ENCODE measurements at regions of chr17 and their contacts with region 1.

Region 1: DNA sequence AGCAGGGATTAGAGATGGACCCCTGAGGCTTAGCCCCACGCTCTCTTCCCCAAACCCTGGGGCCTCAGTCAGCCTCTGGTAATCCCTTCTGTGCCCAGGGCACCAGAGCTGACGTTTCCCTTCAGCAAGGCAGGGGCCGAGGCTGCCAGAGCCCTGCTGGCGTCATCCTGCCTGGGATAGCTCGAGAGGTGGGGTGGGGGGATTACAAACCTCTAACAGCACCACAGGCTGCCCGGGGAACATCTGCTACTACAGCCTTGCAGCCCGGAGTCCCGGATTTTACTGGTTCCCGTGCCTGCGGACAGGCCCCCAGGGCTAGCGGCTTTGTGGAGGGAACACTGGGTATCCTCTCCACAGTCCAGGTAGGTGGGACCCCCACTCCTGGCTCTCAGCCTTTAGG is at the start of gene AANAT:
- DNase-seq: no peak
- ATAC-seq: no peak
- H3K4me3 ChIP-seq: no peak within 1 kb of the TSS
- H3K4me3 Mint-ChIP-seq: no peak within 1 kb of the TSS
- H3K27ac ChIP-seq: no peak within 1 kb of the TSS
- H3K27ac Mint-ChIP-seq: peak within 1 kb of the TSS in 1 of 2 donors; percentile 8
- H3K4me1 ChIP-seq: peaks cover 13% of the 10 kb centered on the region
- H3K4me1 Mint-ChIP-seq: peaks cover 0 to 24% of the 10 kb centered on the region in 2 donors
- H3K27me3 ChIP-seq: no peaks in the 10 kb centered on the region
- H3K27me3 Mint-ChIP-seq: peaks cover 0 to 2% of the 10 kb centered on the region in 2 donors
- CTCF ChIP-seq: no peak
- total RNA-seq, gene AANAT: 0.28 to 0.50 TPM in 2 of 3 donors, not detected in the other

Region 2: GRCh38 chr17:76501018-76501826 is 33.9 kb after region 1 on chr17 and contains the start of gene RHBDF2:
- intact Hi-C with region 1: loop called (anchors 1 kb)
- DNase-seq: peak; percentile 94 to 98
- ATAC-seq: peak; percentile 92 to 99 (median 93)
- H3K4me3 ChIP-seq: peak within 1 kb of the TSS; percentile 95
- H3K4me3 Mint-ChIP-seq: peak within 1 kb of the TSS; percentile 97
- H3K27ac ChIP-seq: peak within 1 kb of the TSS; percentile 78
- H3K27ac Mint-ChIP-seq: peak within 1 kb of the TSS; percentile 96 to 97
- H3K4me1 ChIP-seq: peaks cover 61% of the 10 kb centered on the region
- H3K4me1 Mint-ChIP-seq: peaks cover 47 to 61% of the 10 kb centered on the region in 2 donors
- H3K27me3 ChIP-seq: no peaks in the 10 kb centered on the region
- H3K27me3 Mint-ChIP-seq: no peaks in the 10 kb centered on the region
- CTCF ChIP-seq: no peak
- total RNA-seq, gene RHBDF2: 194 to 233 (median 202) TPM

Region 3: GRCh38 chr17:76506408-76507349 is 39.3 kb after region 1 on chr17:
- intact Hi-C with region 1: loop called (anchors 1 kb)
- DNase-seq: peak; percentile 95
- ATAC-seq: peak; percentile 90 to 92 (median 91)
- H3K4me3 ChIP-seq: no peak overlapping the region
- H3K4me3 Mint-ChIP-seq: no peak overlapping the region
- H3K27ac ChIP-seq: peak overlapping the region; percentile 56
- H3K27ac Mint-ChIP-seq: peak overlapping the region in 1 of 2 donors; percentile 74
- H3K4me1 ChIP-seq: peaks cover 33% of the 10 kb centered on the region
- H3K4me1 Mint-ChIP-seq: peaks cover 12 to 25% of the 10 kb centered on the region in 2 donors
- H3K27me3 ChIP-seq: no peaks in the 10 kb centered on the region
- H3K27me3 Mint-ChIP-seq: no peaks in the 10 kb centered on the region
- CTCF ChIP-seq: peak; percentile 84

Region 4: DNA sequence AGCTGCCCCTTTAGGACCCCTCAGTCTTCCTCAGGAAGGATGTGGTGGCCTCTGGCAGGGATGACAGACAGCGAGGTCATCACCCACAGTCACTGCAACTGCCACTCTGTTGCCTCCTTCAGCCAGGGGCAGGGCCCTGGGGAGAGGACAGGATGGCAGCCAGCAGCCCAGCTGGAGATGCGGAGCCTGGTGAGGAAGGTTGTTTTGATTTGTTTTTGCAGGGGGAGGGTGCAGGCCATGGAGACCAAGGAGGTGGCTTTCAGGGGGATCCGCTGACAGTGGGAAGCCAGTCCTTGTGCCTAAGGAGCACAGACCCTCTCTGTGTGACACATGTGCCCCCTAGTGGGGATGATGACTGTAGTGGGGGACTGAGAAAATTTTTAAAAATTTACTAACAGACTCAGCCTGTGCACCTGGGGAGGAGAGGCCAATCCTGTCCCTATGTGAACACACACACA is 79.8 kb after region 1 on chr17:
- intact Hi-C with region 1: loop called (anchors 5 kb)
- DNase-seq: peak; percentile 36 to 82
- ATAC-seq: peak; percentile 66 to 92 (median 81)
- H3K4me3 ChIP-seq: no peak overlapping the region
- H3K4me3 Mint-ChIP-seq: no peak overlapping the region
- H3K27ac ChIP-seq: no peak overlapping the region
- H3K27ac Mint-ChIP-seq: no peak overlapping the region
- H3K4me1 ChIP-seq: peaks cover 43% of the 10 kb centered on the region
- H3K4me1 Mint-ChIP-seq: peaks cover 0 to 21% of the 10 kb centered on the region in 2 donors
- H3K27me3 ChIP-seq: no peaks in the 10 kb centered on the region
- H3K27me3 Mint-ChIP-seq: peaks cover 0 to 3% of the 10 kb centered on the region in 2 donors
- CTCF ChIP-seq: peak; percentile 60

Region 5: DNA sequence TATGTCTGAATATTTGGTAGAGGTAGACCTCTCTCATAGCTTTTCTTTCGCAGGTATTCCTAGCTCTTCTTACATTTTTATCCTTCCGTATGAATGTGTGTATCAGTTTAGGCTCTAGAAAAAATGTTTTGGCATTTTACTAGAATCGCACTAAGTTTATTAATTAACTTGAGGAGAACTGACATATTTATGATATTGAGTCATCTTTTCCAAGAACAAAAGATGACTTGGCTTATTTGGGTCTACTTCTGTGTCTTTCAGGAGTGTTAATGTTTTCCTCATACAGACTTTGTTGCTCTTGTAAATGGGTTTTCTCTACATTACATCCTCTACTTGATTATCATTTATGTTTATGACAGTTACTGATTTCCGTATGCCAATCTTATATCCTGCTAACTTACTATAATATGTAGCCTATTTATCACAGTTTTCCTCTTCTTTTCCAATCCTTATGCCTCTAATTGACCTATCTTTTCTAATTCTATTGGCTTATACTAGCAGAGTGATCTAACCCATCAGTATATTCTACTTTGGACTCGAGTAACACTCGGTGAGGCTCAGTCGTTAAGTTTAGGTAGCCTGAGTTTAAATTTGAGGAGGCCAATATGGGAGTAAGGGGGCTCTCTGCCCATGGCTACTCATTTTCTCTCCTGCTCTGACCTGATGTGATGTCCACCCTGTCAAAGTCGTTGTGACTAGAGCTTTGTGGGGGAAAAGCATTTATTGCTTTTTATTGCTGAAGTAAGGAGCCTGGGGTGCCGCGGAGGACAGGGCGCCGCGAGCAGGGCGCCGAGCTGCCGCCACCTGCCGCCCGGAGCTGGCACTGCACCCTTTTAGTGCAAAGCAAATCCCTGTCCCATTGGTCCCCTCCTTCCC is 156.1 kb after region 1 on chr17:
- intact Hi-C with region 1: loop called (anchors 5 kb)
- DNase-seq: peak; percentile 73 to 86
- ATAC-seq: peak; percentile 94 to 100 (median 99)
- H3K4me3 ChIP-seq: no peak overlapping the region
- H3K4me3 Mint-ChIP-seq: no peak overlapping the region
- H3K27ac ChIP-seq: no peak overlapping the region
- H3K27ac Mint-ChIP-seq: peak overlapping the region in 1 of 2 donors; percentile 23
- H3K4me1 ChIP-seq: no peaks in the 10 kb centered on the region
- H3K4me1 Mint-ChIP-seq: peaks cover 4 to 7% of the 10 kb centered on the region in 2 donors
- H3K27me3 ChIP-seq: no peaks in the 10 kb centered on the region
- H3K27me3 Mint-ChIP-seq: peaks cover 10 to 15% of the 10 kb centered on the region in 2 donors
- CTCF ChIP-seq: peak; percentile 96

Measured in natural killer cell (primary cell).